Endothelial cell of umbilical vein (primary cell): ENCODE measurements at regions of chr10 and their contacts with region 1.

Region 1: DNA sequence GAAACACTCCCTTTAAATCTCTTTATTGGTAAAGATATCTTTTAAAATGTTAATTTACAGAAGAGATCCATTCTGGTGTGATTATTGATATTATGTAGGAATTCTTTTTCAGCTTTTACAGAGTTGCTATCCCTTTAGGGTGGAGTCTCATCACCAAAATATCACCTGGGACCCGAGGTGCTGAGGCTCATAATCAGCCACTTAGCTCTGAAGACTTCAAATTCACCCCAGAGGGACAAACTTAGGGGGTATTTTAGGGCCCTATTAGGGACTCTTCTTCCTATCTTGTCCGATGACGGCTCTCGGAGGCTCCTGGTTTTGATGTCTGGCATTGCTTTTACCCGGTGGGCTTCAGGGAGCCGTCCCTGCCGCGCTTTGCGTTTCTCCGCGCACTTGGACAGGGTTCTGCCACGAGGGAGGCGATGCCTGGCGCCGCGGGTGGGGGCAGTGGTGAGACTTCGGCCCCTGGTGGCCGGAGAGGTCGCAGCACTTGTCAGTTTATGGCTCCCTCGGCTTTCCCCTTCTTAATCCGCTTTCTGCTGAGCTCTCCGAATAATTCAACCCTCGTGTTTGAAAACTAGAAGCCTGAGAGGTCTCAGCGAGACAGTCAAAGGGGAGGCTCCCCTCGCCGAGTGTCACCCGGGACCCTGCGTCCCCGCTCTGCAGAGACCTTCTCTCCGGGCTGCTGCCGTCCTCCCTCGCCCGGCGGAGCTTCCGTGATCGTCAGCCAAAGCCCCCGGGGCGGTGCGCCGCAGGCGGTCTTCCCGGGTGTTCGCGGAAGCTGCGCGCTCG is 27.8 kb downstream of the RBM20 start:
- DNase-seq: peak; percentile 73
- H3K4me3 ChIP-seq: peak overlapping the region; percentile 25 to 62 (median 52)
- H3K27ac ChIP-seq: no peak overlapping the region
- H3K4me1 ChIP-seq: peaks cover 4% of the 10 kb centered on the region
- H3K27me3 ChIP-seq: peaks cover 37 to 44% of the 10 kb centered on the region in 2 experiments
- CTCF ChIP-seq: peak; percentile 90 to 99
- POLR2A ChIP-seq: no peak

Region 2: DNA sequence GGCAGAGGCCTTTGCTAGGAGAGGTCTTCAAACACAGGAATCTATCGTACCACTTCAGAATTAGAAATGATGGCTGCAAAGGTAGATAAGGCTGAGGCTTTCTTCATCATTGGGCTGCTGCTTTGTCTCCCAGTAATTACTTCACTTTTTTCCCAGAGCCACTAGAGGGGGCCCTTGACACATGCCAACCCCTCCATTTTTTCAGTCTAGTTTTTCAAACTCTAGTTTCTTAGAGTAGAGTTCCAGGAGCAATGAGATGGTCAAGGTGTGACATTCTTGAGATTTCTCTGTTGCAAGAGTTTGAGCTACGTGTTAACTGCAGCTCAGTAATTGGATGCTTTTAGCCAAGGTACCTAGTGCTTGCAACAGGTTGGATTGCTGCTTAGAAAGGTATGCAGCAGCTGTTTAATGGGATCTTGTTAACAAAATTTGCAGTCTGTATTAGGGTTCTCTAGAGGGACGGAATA is 61.6 kb before region 1 on chr10:
- CTCF ChIA-PET with region 1: interaction called, 22 read pairs
- POLR2A ChIA-PET with region 1: no interaction called
- dilution Hi-C with region 1: no loop called
- intact Hi-C with region 1: loop called (anchors 2 kb)
- DNase-seq: peak; percentile 58
- H3K4me3 ChIP-seq: no peak overlapping the region
- H3K27ac ChIP-seq: no peak overlapping the region
- H3K4me1 ChIP-seq: no peaks in the 10 kb centered on the region
- H3K27me3 ChIP-seq: peaks cover 6 to 10% of the 10 kb centered on the region in 2 experiments
- CTCF ChIP-seq: peak; percentile 68 to 71
- POLR2A ChIP-seq: no peak

Region 3: DNA sequence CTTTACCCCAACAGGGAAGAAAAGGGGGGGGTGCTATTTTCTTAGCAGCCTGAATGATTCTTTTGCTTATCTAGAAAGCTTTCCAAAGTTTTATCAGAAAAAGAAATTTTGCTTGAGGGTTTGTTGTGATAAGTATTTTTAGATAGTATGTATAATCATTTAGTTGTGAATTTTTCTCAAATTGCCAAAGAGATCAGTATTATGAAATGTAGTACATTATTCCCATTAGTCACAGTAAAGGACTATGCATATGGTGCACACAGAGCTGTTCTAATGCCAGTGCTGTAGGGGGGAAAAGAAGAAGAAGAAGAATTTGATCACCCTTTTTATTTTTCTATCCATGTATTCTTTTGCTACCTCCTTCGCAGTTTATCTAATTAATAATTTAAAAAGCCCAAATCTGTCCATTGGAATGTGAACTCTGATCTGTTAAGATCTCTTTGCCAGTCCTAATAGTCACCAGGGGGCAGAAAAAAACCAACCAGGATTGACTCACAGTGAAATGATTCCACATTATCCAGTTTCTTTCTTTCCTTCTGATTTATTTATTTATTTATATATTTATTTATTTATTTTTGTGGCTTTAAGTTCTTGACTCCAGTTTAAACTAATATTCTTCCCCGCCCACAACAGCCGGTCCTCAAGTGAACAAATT is 23.2 kb before region 1 on chr10:
- CTCF ChIA-PET with region 1: interaction called, 10 read pairs
- POLR2A ChIA-PET with region 1: no interaction called
- dilution Hi-C with region 1: no loop called
- intact Hi-C with region 1: no loop called
- DNase-seq: no peak
- H3K4me3 ChIP-seq: no peak overlapping the region
- H3K27ac ChIP-seq: no peak overlapping the region
- H3K4me1 ChIP-seq: no peaks in the 10 kb centered on the region
- H3K27me3 ChIP-seq: peaks cover 31 to 73% of the 10 kb centered on the region in 2 experiments
- CTCF ChIP-seq: no peak
- POLR2A ChIP-seq: no peak

Region 4: GRCh38 chr10:110657968-110658691 is 13.9 kb before region 1 on chr10:
- CTCF ChIA-PET with region 1: interaction called, 15 read pairs
- POLR2A ChIA-PET with region 1: no interaction called
- dilution Hi-C with region 1: no loop called
- intact Hi-C with region 1: no loop called
- DNase-seq: no peak
- H3K4me3 ChIP-seq: no peak overlapping the region
- H3K27ac ChIP-seq: no peak overlapping the region
- H3K4me1 ChIP-seq: no peaks in the 10 kb centered on the region
- H3K27me3 ChIP-seq: peaks cover 9 to 11% of the 10 kb centered on the region in 2 experiments
- CTCF ChIP-seq: no peak
- POLR2A ChIP-seq: no peak

Region 5: DNA sequence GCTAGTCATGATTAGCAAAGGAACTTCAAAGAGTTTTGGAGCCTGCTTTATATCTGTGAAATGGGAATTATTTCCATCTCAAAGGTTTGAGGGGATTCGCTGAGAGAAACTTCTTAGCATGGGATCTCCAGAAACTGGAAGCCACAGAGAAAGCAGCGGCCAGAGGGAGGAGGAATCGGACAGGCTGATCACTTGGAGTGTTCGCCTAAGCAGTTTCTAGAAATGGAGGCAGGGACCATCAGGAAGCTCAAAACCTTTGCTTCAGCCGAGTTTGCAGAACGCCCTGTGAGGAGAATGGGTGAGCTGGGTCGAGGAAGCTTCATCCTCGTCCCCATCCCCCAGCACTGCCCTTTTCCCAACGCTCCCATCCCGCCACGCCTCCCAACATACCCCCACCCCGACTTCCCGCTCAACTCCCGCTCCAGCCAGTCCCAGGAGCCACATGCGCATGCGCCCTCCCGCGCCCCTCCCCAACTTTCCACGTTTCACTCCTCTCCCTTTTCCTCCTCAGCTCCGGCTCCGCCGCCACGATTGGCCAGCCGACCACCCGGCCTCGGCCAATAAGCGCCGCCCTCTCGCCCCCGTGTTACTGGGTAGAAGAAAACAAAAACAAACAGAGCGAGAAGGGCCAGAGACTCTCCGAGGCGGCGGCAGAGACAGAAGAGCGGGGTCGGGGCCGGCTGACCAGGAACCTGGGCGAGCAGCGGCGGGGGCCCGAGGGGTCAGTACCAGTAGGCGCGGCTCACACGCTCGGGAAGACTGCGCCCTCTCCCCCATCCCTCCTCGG is 199.5 kb after region 1 on chr10 and contains the start of gene PDCD4:
- CTCF ChIA-PET with region 1: no interaction called
- POLR2A ChIA-PET with region 1: interaction called, 3 read pairs
- dilution Hi-C with region 1: no loop called
- intact Hi-C with region 1: loop called (anchors 5 kb)
- DNase-seq: peak; percentile 99
- H3K4me3 ChIP-seq: peak within 1 kb of the TSS; percentile 55 to 96 (median 85)
- H3K27ac ChIP-seq: peak within 1 kb of the TSS; percentile 57
- H3K4me1 ChIP-seq: peaks cover 21% of the 10 kb centered on the region
- H3K27me3 ChIP-seq: peaks cover 5 to 7% of the 10 kb centered on the region in 2 experiments
- CTCF ChIP-seq: no peak
- POLR2A ChIP-seq: peak; percentile 80
- total RNA-seq, gene PDCD4: 46.1 and 47.9 TPM in 2 replicates